ENCODE measurements at regions of chrX and their contacts with region 1.

Region 1: DNA sequence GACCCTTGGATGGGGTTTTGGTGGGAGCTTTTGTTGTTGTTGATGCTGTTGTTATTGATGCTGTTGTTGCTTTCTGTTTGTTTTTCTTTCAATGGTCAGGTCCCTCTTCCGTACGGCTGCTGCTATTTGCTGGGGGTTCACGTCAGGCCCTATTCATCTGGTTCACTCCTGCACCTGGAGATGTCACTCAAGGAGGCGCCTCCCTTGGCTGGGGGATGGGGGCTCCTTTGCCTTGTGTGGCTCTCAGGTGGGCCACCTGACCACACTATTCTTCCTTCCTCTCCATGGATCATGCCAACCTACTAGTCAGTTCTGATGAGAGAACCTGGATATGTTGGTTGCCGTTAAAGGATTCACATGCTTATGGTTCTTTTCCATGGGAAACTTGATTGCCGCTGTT is 39.1 kb upstream of the PRPS1 start:
- DNase-seq: no peak

Region 2: GRCh38 chrX:107537815-107538214 is 51.4 kb before region 1 on chrX:
- intact Hi-C with region 1: loop called in 1 of 2 experiments (anchors 2 kb)
- DNase-seq: no peak

Measured in posterior vena cava (tissue), 2 donors.